PC-9 (cell line): ENCODE measurements at regions of chr1 and their contacts with region 1.

Region 1: GRCh38 chr1:81113688-81114087 is 687.0 kb upstream of the ADGRL2 start:
- DNase-seq: no peak
- H3K4me3 ChIP-seq: no peak overlapping the region
- H3K27ac ChIP-seq: no peak overlapping the region
- H3K4me1 ChIP-seq: no peaks in the 10 kb centered on the region
- H3K27me3 ChIP-seq: no peaks in the 10 kb centered on the region
- CTCF ChIP-seq: no peak

Region 2: DNA sequence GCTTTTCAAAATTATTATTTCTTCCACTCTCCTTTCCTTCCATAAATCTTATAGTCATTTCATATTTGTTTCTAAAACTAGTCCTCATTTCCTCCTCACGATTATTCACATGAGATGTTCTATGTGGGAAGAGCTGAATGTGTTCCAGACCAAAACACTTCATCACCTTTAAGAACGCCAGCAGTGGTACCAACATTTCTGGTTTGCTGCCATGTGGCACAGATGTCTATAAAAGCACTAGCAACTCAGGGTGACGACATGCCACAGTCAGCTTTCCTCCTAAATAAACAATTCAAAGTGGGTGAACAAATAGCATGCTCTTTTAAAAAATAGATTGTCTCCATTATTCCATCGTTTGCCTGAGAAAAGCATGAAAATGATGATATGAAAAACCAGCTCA is 530.7 kb before region 1 on chr1:
- CTCF ChIA-PET with region 1: no interaction called
- POLR2A ChIA-PET with region 1: interaction called, 21 read pairs
- intact Hi-C with region 1: no loop called
- DNase-seq: no peak
- H3K4me3 ChIP-seq: no peak overlapping the region
- H3K27ac ChIP-seq: no peak overlapping the region
- H3K4me1 ChIP-seq: no peaks in the 10 kb centered on the region
- H3K27me3 ChIP-seq: no peaks in the 10 kb centered on the region
- CTCF ChIP-seq: no peak